Activated CD4-positive, alpha-beta memory T cell treated with anti-CD3 and anti-CD28 coated beads for 36 hours (primary cell): ENCODE measurements at regions of chr14 and their contacts with region 1.

Region 1: DNA sequence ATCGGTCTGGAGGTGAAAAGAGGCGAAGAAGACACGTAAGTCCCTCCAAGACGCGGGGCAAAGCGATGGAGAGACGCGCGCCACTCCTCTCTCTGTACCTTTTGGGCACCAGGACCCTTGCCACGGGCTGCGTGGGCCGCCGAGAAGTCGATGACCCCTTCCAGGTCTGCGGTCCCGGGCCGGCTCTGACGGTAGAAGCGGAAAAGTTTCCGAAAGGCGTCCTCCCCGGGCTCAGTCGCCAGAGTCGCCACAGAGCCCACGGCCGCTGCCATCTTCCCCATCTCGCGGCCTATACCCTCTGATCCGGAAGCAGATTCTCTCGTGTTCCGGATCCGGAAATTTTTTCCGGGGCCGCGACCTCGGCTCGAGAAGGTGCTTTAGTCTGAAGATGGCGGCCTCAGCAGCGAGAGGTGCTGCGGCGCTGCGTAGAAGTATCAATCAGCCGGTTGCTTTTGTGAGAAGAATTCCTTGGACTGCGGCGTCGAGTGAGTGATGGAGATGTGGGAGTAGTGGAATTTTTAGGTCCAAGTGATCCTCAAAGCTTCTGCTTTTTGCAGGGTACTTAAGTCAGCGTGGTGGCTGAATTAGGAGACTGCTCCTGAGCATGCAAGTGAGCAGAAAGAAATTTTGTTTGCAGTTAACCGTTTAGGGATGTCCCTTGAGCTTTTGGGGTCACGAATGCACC is at the starts of genes ALKBH1 and SLIRP:
- DNase-seq: peak; percentile 93
- H3K4me3 Mint-ChIP-seq: peak within 1 kb of the TSS; percentile 90
- H3K27ac Mint-ChIP-seq: peak within 1 kb of the TSS; percentile 86
- H3K4me1 Mint-ChIP-seq: peaks cover 45% of the 10 kb centered on the region
- H3K27me3 Mint-ChIP-seq: no peaks in the 10 kb centered on the region
- total RNA-seq, gene ALKBH1: 13.2 to 16.1 TPM
- total RNA-seq, gene SLIRP: 138 to 146 TPM

Region 2: DNA sequence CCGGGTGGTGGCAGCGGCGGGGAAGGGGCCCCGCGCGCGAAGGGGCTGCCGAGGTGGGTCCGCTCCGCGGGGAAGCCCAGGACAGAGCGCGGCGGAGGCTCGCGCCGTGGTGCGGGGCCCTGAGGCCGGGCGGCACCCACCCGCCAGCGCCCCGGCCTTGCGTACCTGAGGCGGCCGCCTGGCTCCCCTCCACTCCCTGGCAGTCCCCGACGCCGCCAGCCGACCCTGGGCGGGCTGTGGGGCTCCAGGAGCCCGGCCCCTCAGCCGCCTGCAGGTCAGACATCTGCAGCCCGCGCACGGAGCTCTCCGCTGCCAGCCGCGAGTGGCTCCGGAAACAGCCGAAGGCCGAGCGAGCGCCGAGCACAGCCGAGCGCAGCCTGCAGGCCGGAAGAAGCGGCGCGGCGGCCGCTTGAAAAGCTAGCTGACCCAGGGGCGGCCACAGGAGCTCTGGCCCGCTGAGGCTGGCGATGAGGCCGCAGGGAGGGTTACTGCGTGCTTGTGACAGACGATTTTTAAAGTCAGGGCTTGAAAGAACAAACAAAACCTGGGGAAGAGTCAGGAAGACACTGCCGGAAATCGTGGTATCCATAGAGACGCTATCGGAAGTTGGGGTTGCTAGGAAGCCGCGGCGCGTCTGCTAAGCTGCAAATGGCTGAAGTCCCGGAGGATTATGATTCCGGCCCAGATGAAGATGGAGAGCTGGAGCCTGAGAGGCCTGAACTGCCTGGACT is 330.9 kb before region 1 on chr14 and contains the starts of genes SAMD15 and TMED8:
- CTCF ChIA-PET with region 1: interaction called, 3 read pairs
- POLR2A ChIA-PET with region 1: interaction called, 3 read pairs
- intact Hi-C with region 1: loop called (anchors 10 kb)
- DNase-seq: peak; percentile 88
- H3K4me3 Mint-ChIP-seq: peak within 1 kb of the TSS; percentile 92
- H3K27ac Mint-ChIP-seq: peak within 1 kb of the TSS; percentile 82
- H3K4me1 Mint-ChIP-seq: peaks cover 42% of the 10 kb centered on the region
- H3K27me3 Mint-ChIP-seq: no peaks in the 10 kb centered on the region
- total RNA-seq, gene SAMD15: 0.38 TPM in 1 of 2 experiments, not detected in the other
- total RNA-seq, gene TMED8: 26.9 to 27.8 TPM

Region 3: DNA sequence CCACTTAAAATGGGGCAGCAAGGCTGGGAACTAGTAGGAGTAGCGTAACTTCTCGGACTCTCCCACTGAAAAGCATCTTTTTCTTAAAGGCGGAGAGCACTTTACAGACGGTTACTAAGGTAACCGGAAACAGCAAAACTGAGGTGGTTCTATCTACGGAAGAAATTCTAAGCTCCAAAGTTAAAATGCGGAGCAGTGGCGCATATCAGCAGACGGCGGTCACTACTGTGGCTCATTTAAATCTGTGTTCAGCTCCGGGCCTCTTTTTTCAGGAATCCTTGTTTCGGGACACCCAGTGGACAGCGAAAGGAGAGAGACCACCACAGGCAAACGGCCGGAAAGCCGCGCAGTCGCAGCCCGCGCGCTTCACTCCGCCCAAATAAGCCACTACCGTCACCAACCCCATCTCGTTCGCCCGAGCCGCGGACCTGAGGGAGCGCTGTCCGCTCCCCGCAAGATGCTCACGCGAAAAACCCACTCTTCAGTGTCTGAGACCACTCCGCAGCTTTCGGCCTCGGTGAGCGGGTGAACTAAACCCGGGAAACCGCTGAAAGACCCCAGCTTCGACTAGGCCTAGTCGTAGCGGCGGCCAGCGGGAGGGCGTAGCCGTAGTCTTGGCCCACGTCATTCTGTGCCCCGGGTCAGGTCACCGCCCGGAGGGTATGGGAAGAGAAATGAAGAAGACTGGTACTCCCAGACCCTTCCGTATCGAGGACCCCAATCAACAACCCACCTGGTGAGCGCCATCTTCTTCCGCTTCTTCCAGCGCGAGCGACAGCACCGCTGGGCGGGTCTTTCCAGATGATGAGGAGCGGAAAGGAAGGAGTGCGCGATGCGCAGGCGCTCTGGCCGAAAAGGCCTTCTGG is 52.7 kb after region 1 on chr14 and contains the start of gene SNW1:
- CTCF ChIA-PET with region 1: no interaction called
- POLR2A ChIA-PET with region 1: interaction called, 3 read pairs
- intact Hi-C with region 1: loop called (anchors 1 kb)
- DNase-seq: peak; percentile 95
- H3K4me3 Mint-ChIP-seq: peak within 1 kb of the TSS; percentile 95
- H3K27ac Mint-ChIP-seq: peak within 1 kb of the TSS; percentile 96
- H3K4me1 Mint-ChIP-seq: peaks cover 32% of the 10 kb centered on the region
- H3K27me3 Mint-ChIP-seq: no peaks in the 10 kb centered on the region
- total RNA-seq, gene SNW1: 115 to 120 TPM